PC-9 (cell line): ENCODE measurements at regions of chr11 and their contacts with region 1.

Region 1: DNA sequence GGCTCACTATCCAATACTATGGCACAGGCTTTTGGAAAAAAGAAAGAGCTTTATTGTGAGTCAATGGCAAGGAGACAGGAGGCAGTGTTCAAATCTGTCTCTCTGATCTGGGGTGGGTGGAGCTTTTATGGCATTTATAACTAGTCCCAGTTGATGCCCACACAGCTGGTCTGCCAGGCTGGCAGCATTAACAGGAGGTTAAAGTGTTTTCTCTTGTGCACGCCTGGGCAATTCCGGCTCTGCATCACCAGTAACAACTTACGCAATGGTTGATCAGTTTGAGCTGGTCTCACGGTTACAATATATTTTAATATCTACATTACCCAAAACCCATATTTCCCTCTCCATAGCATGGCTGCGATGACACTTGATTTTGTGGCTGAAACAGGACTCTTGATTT is 15.1 kb upstream of the SMIM38 start:
- DNase-seq: peak in 1 of 2 experiments; percentile 69
- H3K4me3 ChIP-seq: no peak overlapping the region
- H3K27ac ChIP-seq: no peak overlapping the region
- H3K4me1 ChIP-seq: peaks cover 28% of the 10 kb centered on the region
- H3K27me3 ChIP-seq: no peaks in the 10 kb centered on the region
- CTCF ChIP-seq: no peak

Region 2: DNA sequence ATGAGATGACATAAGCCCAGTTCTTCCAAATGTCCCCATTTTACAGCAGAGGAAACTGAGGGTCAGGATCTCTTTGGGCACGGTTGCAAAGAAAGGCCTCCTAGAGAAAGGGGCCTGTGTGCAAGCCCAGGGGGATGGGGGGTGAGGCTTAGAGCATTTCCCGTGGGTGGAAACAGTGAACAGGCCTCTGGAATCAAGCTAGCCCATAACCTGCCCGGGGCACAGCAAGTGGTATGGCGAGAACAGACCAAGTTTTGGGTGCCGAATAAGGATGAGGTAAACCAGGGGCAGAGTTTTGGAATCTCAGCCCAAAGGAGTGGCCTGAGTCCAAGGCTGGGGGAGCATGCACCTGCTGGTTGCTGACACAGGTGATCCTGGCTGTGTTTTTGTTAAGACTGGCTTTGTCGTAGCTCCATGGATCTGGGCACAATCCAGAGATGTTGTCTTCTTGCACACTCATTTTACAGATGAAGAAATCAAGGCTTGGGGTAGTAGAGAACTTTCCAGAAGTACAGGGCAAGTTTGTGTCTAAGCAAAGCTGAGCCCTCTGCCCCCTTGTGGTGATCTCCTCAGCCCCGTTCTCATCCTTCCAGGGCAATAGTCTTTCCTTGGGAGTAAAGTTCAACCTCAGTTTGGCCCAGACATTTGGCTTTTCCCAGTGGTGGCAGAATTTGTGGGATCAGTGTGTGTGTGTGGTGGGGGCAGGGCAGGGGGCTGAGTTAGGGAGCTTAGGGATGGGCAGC is 99.9 kb after region 1 on chr11:
- CTCF ChIA-PET with region 1: no interaction called
- POLR2A ChIA-PET with region 1: no interaction called
- intact Hi-C with region 1: no loop called
- DNase-seq: no peak
- H3K4me3 ChIP-seq: no peak overlapping the region
- H3K27ac ChIP-seq: no peak overlapping the region
- H3K4me1 ChIP-seq: no peaks in the 10 kb centered on the region
- H3K27me3 ChIP-seq: no peaks in the 10 kb centered on the region
- CTCF ChIP-seq: peak; percentile 66

Region 3: DNA sequence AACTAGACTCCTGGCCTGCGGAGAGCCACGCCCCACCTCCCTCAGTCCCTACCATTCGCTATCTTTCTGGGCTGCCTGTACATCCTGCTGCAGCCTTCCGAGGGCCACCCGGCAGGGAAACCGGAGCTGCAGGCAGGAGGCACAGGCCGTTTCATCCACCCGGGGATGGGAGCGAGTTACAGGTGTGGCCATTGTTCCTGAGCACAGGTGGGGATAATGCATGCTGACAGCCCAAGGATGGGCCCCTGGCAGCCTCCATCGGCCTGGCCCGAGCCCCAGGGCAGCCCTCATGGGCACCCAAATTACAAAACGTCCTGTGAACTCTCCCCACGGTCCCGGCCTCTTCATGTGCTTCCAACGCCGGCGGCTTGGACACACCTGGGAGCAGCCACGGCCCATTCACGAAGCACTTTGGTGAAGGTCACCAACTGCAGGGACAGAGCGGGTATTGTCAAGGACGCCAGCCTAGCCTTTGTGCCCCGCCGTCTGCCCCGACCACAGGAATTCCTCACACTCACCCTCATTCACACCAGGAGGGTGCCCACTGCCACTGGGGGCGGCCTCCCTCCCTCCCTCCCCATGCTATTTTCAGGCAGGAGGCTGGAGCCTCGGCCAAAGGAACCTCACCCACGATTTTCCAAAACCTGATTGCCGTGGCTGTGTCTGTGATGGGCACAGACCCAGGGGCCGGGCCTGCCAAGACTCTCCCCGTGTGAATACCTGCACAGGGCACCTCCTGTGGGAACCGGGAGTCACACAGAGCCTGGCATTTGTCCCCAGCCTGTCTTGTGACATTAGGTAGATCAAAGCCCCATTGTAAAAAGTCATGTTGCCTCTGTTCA is 111.2 kb after region 1 on chr11:
- CTCF ChIA-PET with region 1: no interaction called
- POLR2A ChIA-PET with region 1: interaction called, 10 read pairs
- intact Hi-C with region 1: no loop called
- DNase-seq: no peak
- H3K4me3 ChIP-seq: no peak overlapping the region
- H3K27ac ChIP-seq: no peak overlapping the region
- H3K4me1 ChIP-seq: no peaks in the 10 kb centered on the region
- H3K27me3 ChIP-seq: no peaks in the 10 kb centered on the region
- CTCF ChIP-seq: no peak